Thyroid gland (tissue), 4 donors: ENCODE measurements at regions of chr14 and their contacts with region 1.

Region 1: DNA sequence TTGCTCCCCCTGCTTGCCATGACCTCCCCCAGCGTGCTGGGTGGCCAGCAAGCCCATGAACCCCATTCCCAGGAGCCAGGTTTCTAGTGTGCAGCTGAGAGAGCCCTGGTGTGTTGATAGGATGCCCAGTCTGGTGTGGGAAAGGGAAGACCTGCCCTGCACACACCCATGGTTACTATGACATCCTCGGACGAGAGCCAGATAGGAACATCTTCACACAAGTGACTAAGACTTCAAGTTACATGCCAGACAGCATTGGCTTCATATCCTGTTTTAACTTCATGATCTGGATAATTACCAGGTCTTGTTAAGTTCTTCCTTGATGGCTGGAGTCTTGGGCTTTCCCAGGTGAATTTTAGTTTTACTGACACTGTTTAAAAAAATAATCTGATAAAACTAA is 196.6 kb upstream of the EGLN3 start:
- DNase-seq: no peak
- H3K4me3 ChIP-seq: no peak overlapping the region
- H3K27ac ChIP-seq: no peak overlapping the region
- H3K4me1 ChIP-seq: no peaks in the 10 kb centered on the region
- H3K27me3 ChIP-seq: no peaks in the 10 kb centered on the region
- CTCF ChIP-seq: no peak
- POLR2A ChIP-seq: no peak

Region 2: DNA sequence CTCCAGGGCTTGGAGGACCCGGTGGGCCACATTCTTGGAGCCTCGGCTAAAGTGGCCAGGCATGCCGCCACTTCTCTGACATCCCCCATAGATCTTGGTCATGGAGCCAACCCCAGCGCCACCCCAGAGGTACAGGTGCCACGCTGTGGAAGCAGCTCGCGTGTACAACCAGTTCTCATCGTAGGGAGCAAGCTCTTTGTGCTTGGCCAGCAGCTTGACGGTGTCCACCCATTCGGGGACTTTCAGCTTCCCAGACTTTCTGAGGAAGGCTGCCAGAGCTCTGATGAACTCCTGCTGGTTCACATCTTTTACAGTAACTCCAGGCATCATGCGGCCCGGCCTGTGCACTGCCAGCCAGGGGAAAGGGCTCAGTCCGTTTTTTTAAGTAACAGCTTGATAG is 421.3 kb after region 1 on chr14:
- intact Hi-C with region 1: loop called (anchors 5 kb)
- DNase-seq: no peak
- H3K4me3 ChIP-seq: no peak overlapping the region
- H3K27ac ChIP-seq: no peak overlapping the region
- H3K4me1 ChIP-seq: no peaks in the 10 kb centered on the region
- H3K27me3 ChIP-seq: no peaks in the 10 kb centered on the region
- CTCF ChIP-seq: no peak
- POLR2A ChIP-seq: no peak